Activated B cell treated with CpG ODN at 0.5 μM for 24 hours (primary cell): ENCODE measurements at regions of chr19 and their contacts with region 1.

Region 1: GRCh38 chr19:37896180-37896579 is 10.2 kb downstream of the WDR87 start:
- DNase-seq: no peak
- ATAC-seq: no peak
- H3K4me3 Mint-ChIP-seq: no peak overlapping the region
- H3K27ac Mint-ChIP-seq: no peak overlapping the region
- H3K4me1 Mint-ChIP-seq: peaks cover 6% of the 10 kb centered on the region
- H3K27me3 Mint-ChIP-seq: peaks cover 21% of the 10 kb centered on the region
- CTCF ChIP-seq: no peak

Region 2: DNA sequence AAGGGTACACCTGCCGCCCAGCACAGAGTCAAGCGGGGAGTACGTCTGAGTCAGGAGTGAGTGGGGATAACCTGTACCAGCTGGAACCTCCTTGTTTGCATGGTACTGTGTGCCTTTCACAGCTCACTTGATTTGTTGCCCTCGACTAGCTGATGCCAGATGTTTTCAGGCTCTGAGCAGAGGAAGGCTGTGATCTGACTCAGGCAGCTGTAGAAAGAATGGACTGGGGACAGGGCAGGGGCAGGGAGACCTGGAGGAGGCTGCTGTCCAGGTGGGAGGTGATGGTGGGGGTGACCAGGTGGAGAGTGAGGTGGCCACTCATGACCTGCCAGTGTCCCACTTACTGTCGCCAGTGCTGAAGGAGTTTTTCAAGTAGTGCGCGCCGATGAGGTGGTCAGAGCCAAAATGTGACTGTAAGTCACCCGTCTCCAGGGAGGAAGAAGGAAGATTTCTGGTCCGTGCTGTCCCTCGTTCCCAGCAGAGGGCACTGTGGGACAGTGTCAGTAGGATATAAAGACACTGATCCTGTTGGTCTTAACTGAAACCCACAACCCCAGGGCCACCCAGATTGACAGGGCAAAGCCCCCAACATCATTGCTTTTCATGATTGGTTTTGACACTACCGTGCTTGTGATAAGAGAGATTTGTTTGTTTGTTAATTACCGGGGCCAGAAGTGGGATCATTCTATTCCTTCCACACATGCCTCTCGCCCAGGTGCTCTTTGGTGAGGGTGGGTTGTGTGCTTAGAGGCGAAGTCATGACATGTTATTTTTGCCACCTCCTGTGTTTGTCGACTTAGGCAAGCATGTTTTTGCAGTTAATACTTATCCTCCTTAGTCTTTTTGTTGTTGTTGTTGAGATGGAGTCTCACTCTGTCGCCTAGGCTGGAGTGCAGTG is 199.5 kb after region 1 on chr19:
- CTCF ChIA-PET with region 1: interaction called, 33 read pairs
- POLR2A ChIA-PET with region 1: no interaction called
- intact Hi-C with region 1: loop called (anchors 1 kb)
- DNase-seq: peak; percentile 59
- ATAC-seq: peak; percentile 85
- H3K4me3 Mint-ChIP-seq: no peak overlapping the region
- H3K27ac Mint-ChIP-seq: peak overlapping the region; percentile 85
- H3K4me1 Mint-ChIP-seq: peaks cover 18% of the 10 kb centered on the region
- H3K27me3 Mint-ChIP-seq: no peaks in the 10 kb centered on the region
- CTCF ChIP-seq: peak; percentile 33

Region 3: GRCh38 chr19:38142176-38143035 is 246.2 kb after region 1 on chr19:
- CTCF ChIA-PET with region 1: interaction called, 11 read pairs
- POLR2A ChIA-PET with region 1: no interaction called
- intact Hi-C with region 1: no loop called
- DNase-seq: peak; percentile 22
- ATAC-seq: peak; percentile 79
- H3K4me3 Mint-ChIP-seq: no peak overlapping the region
- H3K27ac Mint-ChIP-seq: peak overlapping the region; percentile 24
- H3K4me1 Mint-ChIP-seq: no peaks in the 10 kb centered on the region
- H3K27me3 Mint-ChIP-seq: no peaks in the 10 kb centered on the region
- CTCF ChIP-seq: no peak

Region 4: GRCh38 chr19:38224014-38224862 is 328.1 kb after region 1 on chr19 and contains the start of gene DPF1:
- CTCF ChIA-PET with region 1: no interaction called
- POLR2A ChIA-PET with region 1: interaction called, 4 read pairs
- intact Hi-C with region 1: loop called (anchors 2 kb)
- DNase-seq: peak; percentile 64
- ATAC-seq: peak; percentile 88
- H3K4me3 Mint-ChIP-seq: peak within 1 kb of the TSS; percentile 85
- H3K27ac Mint-ChIP-seq: peak within 1 kb of the TSS; percentile 66
- H3K4me1 Mint-ChIP-seq: peaks cover 35% of the 10 kb centered on the region
- H3K27me3 Mint-ChIP-seq: peaks cover 52% of the 10 kb centered on the region
- CTCF ChIP-seq: no peak
- total RNA-seq, gene DPF1: not detected in 2 replicates

Region 5: DNA sequence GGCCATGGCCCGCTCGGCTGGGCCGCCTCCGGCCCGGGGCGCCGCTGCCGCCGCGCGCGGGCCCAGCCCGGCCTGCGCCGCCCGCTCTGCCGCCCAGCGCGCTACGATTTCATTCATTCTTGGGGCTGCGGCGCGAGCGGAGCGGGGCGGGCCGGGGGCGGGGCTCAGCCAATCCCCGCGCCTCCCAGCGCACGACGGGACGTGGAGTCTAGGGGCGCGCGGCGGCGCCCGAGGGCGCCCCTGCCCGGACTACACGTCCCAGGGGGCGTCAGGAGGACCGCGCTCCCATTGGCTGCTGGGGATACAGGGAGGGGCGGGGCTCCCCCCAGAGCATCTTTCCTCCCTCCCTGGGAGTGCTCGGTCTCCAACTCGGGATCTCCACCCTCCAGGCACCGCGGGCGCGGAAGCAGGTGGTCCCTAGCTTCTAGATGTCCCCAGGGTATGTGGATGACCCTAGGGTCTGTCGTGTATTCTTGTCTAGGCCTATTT is 333.4 kb after region 1 on chr19:
- CTCF ChIA-PET with region 1: no interaction called
- POLR2A ChIA-PET with region 1: interaction called, 4 read pairs
- intact Hi-C with region 1: loop called (anchors 2 kb)
- DNase-seq: peak; percentile 52
- ATAC-seq: peak; percentile 87
- H3K4me3 Mint-ChIP-seq: no peak overlapping the region
- H3K27ac Mint-ChIP-seq: no peak overlapping the region
- H3K4me1 Mint-ChIP-seq: peaks cover 21% of the 10 kb centered on the region
- H3K27me3 Mint-ChIP-seq: peaks cover 40% of the 10 kb centered on the region
- CTCF ChIP-seq: no peak